ENCODE measurements at regions of chr3 and their contacts with region 1.

Region 1: DNA sequence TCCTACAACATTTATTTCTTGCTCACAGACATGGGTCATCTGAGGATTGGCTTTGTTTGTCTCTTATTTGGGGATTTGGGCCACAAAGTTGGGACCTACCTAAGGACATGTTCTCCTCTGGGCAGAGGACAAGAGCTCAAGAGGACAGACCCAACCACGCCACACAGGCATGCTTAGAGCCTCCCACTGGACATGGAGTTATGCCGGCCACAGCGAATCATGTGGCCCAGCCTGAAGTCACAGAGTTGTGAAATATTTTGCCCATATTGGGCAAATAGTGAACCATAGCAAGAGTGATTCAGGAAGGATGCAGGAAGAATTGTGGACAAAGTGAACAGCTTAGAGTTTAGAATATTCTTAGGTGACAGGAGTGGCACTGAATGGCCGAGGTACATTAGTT is 9.9 kb downstream of the TRAK1 start:
- DNase-seq: no peak
- H3K4me3 Mint-ChIP-seq: no peak overlapping the region
- H3K27ac Mint-ChIP-seq: no peak overlapping the region
- H3K4me1 Mint-ChIP-seq: peaks cover 35% of the 10 kb centered on the region
- H3K27me3 Mint-ChIP-seq: no peaks in the 10 kb centered on the region

Region 2: DNA sequence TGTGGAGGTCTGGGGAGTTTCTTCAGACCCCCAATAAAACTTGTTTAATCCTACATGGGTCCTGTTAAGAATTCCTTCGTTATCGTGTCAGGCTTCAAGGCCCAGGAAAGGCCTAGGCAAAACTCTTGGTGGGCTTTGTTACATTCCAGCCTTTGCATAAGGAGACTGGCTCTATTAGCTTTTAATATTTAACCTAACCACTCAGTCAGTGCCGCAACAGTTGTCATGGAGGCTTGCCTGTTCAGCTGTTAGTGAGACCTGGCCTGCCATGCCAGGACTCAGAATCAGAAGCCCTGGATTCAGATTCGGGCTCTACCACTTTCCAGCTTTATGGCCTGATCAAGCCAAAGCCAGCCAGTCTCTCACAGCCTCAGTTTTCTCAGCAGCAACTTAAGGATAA is 1772.0 kb before region 1 on chr3:
- intact Hi-C with region 1: loop called (anchors 5 kb)
- DNase-seq: no peak
- H3K4me3 Mint-ChIP-seq: no peak overlapping the region
- H3K27ac Mint-ChIP-seq: no peak overlapping the region
- H3K4me1 Mint-ChIP-seq: no peaks in the 10 kb centered on the region
- H3K27me3 Mint-ChIP-seq: peaks cover 20% of the 10 kb centered on the region

Region 3: DNA sequence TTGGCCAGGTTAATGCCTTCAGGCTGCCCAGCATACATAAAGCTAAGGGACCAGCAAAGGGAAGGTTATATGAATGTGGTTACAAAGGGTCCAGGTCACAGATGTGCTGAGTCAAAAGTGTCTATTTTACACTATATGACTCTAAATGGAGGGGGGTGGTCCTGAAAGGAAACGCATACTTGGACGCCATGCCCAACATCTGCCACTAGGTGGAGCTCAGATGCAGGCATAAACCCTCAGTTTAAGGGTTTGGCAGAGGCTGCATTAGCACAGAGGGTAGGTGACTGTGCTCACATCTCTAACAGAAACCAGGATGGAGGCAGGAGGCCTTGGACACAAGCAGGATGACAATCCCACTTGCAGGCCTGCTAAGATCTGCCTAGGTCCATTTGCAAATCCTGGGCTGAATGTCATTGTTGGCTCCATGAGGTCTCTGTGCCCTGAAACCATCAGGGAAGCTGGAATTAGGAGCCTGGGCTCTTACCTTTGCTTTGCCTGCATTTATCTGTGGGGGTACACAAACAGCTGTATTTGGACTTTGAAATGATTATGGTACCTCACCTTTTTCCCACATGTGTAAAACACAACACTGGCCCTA is 1520.5 kb before region 1 on chr3:
- intact Hi-C with region 1: loop called (anchors 1 kb)
- DNase-seq: peak; percentile 39
- H3K4me3 Mint-ChIP-seq: no peak overlapping the region
- H3K27ac Mint-ChIP-seq: no peak overlapping the region
- H3K4me1 Mint-ChIP-seq: no peaks in the 10 kb centered on the region
- H3K27me3 Mint-ChIP-seq: peaks cover 4% of the 10 kb centered on the region

Region 4: DNA sequence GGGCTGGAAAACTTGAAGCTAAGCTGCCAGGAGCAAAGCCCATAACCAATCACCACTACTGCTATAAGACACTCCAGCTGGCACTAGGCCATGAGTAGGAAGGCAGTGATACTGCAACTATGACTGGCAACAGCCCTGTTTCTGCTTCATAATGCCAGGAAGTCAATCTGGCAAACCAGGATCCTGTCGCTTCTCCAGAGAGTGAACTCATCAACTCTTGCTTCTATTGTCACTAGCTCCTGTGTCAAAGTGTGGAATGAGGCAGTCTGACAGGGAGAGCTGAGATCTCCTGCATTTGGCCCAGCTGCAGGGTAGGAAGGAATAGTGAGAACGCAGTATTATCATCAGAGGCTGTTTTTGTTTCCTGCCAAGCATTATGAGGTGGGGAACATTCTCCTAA is 796.5 kb before region 1 on chr3:
- intact Hi-C with region 1: no loop called
- DNase-seq: no peak
- H3K4me3 Mint-ChIP-seq: no peak overlapping the region
- H3K27ac Mint-ChIP-seq: no peak overlapping the region
- H3K4me1 Mint-ChIP-seq: no peaks in the 10 kb centered on the region
- H3K27me3 Mint-ChIP-seq: peaks cover 3% of the 10 kb centered on the region

Region 5: GRCh38 chr3:41893977-41894376 is 207.1 kb before region 1 on chr3:
- intact Hi-C with region 1: loop called (anchors 1 kb)
- DNase-seq: no peak
- H3K4me3 Mint-ChIP-seq: no peak overlapping the region
- H3K27ac Mint-ChIP-seq: no peak overlapping the region
- H3K4me1 Mint-ChIP-seq: no peaks in the 10 kb centered on the region
- H3K27me3 Mint-ChIP-seq: no peaks in the 10 kb centered on the region

Region 6: DNA sequence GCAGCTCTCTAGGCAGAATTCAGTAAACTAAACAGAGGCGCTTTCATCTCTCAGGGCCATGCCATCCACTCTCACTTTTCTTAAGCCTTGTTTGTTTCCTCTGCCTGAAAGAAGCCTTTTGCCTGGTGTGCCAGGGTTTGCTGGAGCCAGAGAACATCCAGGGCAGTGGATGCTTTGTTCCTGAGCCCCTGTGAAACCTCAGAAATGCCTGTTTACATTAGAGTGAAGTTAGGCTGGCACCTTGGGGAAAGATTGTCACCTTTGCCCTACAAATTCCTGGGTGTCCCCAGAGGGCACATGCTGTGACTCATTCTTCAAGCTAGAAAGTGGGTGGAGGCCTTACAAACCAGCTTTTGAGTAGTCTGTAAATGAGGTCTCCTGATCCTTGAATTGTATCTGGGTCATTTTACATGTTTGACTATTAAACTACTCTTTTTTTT is 20.6 kb before region 1 on chr3:
- intact Hi-C with region 1: loop called (anchors 1 kb)
- DNase-seq: no peak
- H3K4me3 Mint-ChIP-seq: peak overlapping the region; percentile 38
- H3K27ac Mint-ChIP-seq: peak overlapping the region; percentile 84
- H3K4me1 Mint-ChIP-seq: peaks cover 51% of the 10 kb centered on the region
- H3K27me3 Mint-ChIP-seq: no peaks in the 10 kb centered on the region

Region 7: DNA sequence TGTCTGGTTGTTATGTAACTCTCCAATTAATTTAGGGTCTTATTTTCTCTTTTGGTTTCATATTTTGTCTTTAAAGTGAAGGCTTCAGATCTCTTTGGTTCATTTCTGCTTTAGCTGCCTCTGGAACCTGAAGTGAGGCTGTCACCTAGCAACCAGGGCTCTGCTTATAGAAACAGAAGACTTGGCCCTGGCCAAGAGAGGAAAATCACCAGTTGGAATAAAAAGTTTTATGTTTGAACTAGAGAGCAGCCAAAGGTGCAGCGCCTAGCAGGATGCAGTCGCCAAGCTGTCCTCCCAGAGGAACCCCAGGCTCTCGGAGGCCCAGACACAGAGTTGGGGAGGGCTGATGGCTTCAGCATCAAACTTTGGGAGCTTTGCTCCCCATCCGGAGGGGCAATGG is 268.3 kb after region 1 on chr3:
- intact Hi-C with region 1: no loop called
- DNase-seq: no peak
- H3K4me3 Mint-ChIP-seq: no peak overlapping the region
- H3K27ac Mint-ChIP-seq: no peak overlapping the region
- H3K4me1 Mint-ChIP-seq: no peaks in the 10 kb centered on the region
- H3K27me3 Mint-ChIP-seq: peaks cover 2% of the 10 kb centered on the region